OCI-LY7 (cell line): ENCODE measurements at regions of chr18 and their contacts with region 1.

Region 1: DNA sequence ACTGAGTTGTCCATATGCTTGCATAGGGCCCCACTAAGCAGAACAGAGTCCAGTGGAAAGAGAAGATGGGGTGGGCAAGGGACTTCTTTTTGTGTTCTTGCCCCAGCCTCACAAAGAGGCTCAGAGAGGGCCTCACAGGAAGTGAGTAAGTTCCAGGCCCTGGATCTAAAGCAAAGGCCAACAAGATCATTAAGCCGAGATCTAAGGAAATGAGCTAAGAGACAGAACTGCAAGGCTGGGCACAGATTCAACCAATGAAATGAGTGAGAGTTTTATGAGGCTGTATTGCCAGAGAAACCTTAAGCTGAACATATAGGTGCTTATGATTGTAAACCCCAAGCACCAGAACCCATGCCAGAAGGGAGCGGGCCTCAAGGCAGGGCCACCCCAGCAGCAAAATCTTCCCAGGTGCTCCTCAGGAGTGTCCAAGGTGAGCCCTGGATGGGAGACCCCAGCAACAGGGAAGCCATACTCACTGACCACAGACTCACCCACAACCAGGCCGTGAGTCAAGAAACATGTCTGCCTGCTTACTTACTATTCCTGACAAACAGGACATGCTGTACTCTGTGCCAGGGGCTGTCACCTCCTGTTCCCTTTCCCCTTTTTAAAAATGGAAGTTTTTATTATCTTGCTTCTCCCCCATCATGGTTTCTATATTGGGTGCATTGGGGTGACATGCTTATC is 40.2 kb downstream of the SLC14A1 start:
- DNase-seq: no peak
- H3K4me3 ChIP-seq: no peak overlapping the region
- H3K27ac ChIP-seq: no peak overlapping the region
- H3K4me1 ChIP-seq: no peaks in the 10 kb centered on the region
- CTCF ChIP-seq: no peak

Region 2: GRCh38 chr18:45449418-45450227 is 314.5 kb before region 1 on chr18:
- CTCF ChIA-PET with region 1: no interaction called
- POLR2A ChIA-PET with region 1: no interaction called
- intact Hi-C with region 1: no loop called
- DNase-seq: no peak
- H3K4me3 ChIP-seq: no peak overlapping the region
- H3K27ac ChIP-seq: no peak overlapping the region
- H3K4me1 ChIP-seq: no peaks in the 10 kb centered on the region
- CTCF ChIP-seq: no peak

Region 3: DNA sequence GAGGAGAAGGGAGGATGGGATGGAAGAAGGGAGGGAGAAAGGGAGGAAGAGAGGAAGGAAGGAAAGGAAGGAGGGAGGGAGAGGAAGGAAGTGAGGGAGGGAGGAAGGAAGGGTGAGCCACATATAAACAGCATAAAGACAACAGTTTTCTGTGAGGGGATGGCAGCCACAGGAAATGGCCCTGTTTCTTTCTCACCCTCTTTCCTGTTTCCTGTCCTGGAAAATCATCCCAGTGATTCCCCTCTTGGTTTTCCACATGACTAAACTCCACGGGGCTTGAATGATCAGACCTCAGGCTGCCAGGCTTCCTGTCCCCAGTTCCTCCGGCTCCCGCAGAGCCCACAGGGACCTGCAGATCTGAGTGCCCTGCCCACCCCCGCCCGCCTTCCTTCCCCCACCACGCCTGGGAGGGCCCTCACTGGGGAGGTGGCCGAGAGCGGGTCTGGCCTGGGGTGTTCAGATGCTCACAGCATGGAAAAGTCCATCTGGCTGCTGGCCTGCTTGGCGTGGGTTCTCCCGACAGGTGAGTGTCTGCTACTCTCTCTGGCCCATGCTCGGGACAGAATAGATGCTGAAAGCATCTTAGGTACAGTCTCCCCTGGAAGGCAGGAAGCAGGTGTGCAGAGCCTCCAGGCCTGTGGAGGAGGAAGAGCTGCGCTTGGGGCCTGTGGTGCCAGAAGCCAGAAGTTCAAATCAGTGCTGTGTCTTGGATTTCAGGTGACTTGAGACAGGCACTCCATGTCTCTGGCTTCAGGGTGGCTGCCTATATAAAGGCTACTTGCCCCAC is 61.3 kb after region 1 on chr18 and contains the start of gene SIGLEC15:
- CTCF ChIA-PET with region 1: interaction called, 10 read pairs
- POLR2A ChIA-PET with region 1: no interaction called
- intact Hi-C with region 1: no loop called
- DNase-seq: peak; percentile 23
- H3K4me3 ChIP-seq: no peak within 1 kb of the TSS
- H3K27ac ChIP-seq: no peak within 1 kb of the TSS
- H3K4me1 ChIP-seq: peaks cover 8% of the 10 kb centered on the region
- CTCF ChIP-seq: no peak
- total RNA-seq, gene SIGLEC15: not detected in 2 replicates